ENCODE measurements at regions of chr16 and their contacts with region 1.

Region 1: GRCh38 chr16:85986931-85987749 is 88.2 kb downstream of the IRF8 start:
- DNase-seq: peak; percentile 58
- H3K4me3 Mint-ChIP-seq: no peak overlapping the region
- H3K27ac Mint-ChIP-seq: peak overlapping the region; percentile 96
- H3K4me1 Mint-ChIP-seq: peaks cover 80% of the 10 kb centered on the region
- H3K27me3 Mint-ChIP-seq: peaks cover 6% of the 10 kb centered on the region

Region 2: DNA sequence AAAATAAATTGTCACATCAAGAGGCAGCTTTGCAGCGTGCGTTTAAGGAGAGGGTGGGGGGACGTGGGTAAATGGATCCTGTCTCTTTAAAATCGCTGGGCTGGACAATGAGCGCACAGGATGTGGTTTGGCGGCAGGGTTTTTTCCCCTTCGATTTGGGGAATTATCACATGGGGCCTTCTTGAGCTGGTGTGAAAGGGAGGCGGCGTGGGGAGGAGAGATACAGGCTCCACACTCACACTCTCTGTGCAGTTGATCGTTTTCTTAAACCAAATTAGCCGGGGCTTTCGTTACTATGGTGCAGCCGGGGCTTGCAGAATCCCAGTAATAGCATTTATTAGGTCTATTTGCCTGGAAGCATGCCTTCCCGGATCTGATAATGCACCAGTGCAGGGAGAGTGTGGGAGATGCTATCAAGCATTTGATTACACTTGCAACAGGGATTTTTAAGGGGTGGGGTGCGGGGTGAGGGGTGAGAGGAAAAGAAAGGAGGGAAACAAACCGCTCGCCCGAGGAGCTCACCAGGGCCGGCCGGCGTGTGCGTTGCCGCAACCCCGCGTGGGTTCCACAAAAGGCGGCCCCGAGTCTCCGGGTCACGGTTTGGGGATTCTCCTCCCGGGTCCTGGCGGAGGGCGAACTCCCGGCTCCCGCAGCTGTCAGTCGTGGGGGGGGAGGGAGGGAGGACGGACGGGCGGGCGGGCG is 432.9 kb before region 1 on chr16:
- CTCF ChIA-PET with region 1: no interaction called
- intact Hi-C with region 1: loop called (anchors 2 kb)
- DNase-seq: peak; percentile 93
- H3K4me3 Mint-ChIP-seq: peak overlapping the region; percentile 79
- H3K27ac Mint-ChIP-seq: peak overlapping the region; percentile 93
- H3K4me1 Mint-ChIP-seq: peaks cover 42% of the 10 kb centered on the region
- H3K27me3 Mint-ChIP-seq: no peaks in the 10 kb centered on the region

Region 3: DNA sequence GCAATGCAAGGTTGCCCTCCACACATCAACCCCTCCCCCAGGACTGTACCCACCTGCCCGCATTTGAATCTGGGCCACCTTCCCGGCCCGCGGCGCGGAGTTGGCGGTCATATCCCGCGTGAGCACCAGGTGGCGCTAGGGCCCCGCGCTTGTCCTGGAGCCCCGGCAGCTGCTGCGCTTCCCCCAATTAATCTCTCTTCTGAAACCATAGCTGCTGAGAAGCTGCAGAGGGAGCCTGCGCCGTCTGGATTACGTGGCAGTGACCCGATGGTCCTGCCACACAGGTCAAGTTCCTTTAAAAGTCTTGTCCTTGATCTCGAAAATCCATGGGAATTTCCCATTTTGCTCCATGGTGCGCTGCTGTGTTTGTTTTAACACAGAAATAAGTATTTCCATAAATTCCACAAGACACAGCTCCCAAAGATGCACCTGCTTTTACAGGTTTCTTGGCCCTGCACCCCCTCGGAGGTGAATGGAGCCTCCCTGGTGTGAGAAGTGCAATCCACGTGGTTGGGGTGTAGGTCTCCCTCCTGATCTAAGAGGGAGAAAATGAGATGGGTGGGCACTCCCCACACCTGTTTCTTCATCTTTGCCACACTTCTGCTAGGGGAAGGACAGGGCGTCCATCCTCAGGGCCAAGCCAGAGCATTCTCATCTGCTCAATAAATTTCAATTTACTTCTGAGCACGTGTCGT is 165.6 kb before region 1 on chr16:
- CTCF ChIA-PET with region 1: interaction called, 163 read pairs
- intact Hi-C with region 1: loop called (anchors 1 kb)
- DNase-seq: peak; percentile 89
- H3K4me3 Mint-ChIP-seq: no peak overlapping the region
- H3K27ac Mint-ChIP-seq: no peak overlapping the region
- H3K4me1 Mint-ChIP-seq: peaks cover 11% of the 10 kb centered on the region
- H3K27me3 Mint-ChIP-seq: no peaks in the 10 kb centered on the region

Region 4: GRCh38 chr16:85898521-85899442 is 88.4 kb before region 1 on chr16 and contains the start of gene IRF8:
- CTCF ChIA-PET with region 1: interaction called, 45 read pairs
- intact Hi-C with region 1: loop called (anchors 1 kb)
- DNase-seq: peak; percentile 88
- H3K4me3 Mint-ChIP-seq: peak within 1 kb of the TSS; percentile 87
- H3K27ac Mint-ChIP-seq: peak within 1 kb of the TSS; percentile 93
- H3K4me1 Mint-ChIP-seq: peaks cover 39% of the 10 kb centered on the region
- H3K27me3 Mint-ChIP-seq: no peaks in the 10 kb centered on the region
- total RNA-seq, gene IRF8: 323 to 328 TPM

Region 5: DNA sequence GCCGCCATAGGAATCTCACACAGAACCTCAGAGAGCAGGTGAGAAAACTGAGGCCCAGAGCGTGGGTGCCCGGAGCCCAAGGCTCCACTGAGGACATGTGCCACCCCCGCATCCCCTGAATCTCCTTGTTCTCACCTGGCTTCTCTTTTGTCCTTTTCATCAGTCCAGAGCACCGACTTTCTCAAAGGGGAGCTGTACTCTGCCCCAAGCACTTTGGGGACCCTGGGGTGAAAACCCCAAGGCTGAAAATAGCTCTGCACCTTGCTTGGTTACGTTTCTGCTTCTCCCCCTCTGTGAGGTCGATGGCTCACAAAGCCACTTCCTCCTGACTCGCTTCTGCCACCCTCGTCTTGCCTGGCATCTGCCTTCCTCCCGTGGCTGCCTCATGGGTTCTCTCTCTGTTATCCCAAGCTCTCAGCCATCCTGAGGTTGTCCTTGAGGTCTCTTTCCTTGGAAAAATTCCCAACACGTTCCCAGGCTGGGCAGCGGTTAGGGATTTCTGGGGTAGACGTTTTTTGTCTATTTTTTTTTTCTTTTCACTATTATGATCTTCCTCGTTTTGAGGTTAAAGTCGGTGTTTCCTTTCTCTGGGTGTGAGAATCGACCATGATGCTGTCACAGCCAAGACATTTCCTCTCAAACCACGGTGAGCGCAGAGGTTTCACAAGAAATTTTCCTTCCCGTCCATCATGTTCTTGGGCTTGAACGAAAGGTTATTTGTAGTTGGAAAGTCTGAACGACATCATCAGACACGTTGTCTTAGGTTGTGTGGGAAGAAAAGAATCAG is 51.0 kb before region 1 on chr16:
- CTCF ChIA-PET with region 1: interaction called, 24 read pairs
- intact Hi-C with region 1: loop called (anchors 1 kb)
- DNase-seq: peak; percentile 90
- H3K4me3 Mint-ChIP-seq: peak overlapping the region; percentile 55
- H3K27ac Mint-ChIP-seq: peak overlapping the region; percentile 96
- H3K4me1 Mint-ChIP-seq: peaks cover 62% of the 10 kb centered on the region
- H3K27me3 Mint-ChIP-seq: no peaks in the 10 kb centered on the region

Region 6: DNA sequence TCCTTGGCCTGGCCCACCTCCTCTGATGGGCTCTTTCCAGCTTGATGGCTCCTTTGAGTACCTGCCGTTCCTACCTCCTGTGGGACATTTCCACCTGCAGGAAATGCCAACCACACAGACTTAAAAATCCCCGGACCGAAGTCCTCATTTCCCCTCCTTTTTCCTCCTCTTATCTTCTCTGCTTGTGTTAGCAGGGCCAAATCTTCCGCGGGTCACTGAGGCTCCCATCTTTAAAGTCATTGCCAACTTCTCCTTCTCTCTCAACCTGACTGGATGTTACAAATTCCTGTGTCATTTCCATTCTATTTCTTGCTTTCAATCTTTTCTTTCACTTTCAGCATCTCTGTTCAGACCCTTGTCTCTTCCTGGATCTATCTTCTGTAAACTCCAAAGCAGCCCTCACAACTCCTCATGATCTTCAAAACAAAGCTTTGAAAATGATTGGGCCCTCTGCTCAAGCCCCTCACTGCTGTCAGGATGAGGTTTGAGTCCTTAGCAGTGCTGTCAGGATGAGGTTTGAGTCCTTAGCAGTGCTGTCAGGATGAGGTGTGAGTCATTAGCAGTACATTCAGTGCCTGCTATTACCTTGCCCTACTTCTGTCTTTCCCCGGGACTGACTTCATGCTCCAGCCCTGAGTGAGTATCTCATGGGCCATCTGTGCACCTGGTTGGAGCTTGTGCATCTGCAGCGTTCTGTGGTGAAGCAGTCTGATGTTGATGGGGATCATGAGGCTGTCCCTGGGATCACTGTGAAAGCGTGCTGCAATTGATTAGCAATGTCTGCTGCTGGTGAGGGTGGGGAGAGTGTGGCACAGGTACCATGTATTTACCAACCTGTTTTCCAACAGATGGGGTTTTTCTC is 12.0 kb after region 1 on chr16:
- CTCF ChIA-PET with region 1: interaction called, 29 read pairs
- intact Hi-C with region 1: loop called (anchors 1 kb)
- DNase-seq: peak; percentile 59
- H3K4me3 Mint-ChIP-seq: peak overlapping the region; percentile 0
- H3K27ac Mint-ChIP-seq: peak overlapping the region; percentile 69
- H3K4me1 Mint-ChIP-seq: peaks cover 55% of the 10 kb centered on the region
- H3K27me3 Mint-ChIP-seq: no peaks in the 10 kb centered on the region

Region 7: GRCh38 chr16:86016201-86016871 is 29.2 kb after region 1 on chr16:
- CTCF ChIA-PET with region 1: interaction called, 19 read pairs
- intact Hi-C with region 1: loop called (anchors 1 kb)
- DNase-seq: peak; percentile 67
- H3K4me3 Mint-ChIP-seq: no peak overlapping the region
- H3K27ac Mint-ChIP-seq: no peak overlapping the region
- H3K4me1 Mint-ChIP-seq: peaks cover 21% of the 10 kb centered on the region
- H3K27me3 Mint-ChIP-seq: peaks cover 40% of the 10 kb centered on the region

Region 8: GRCh38 chr16:86519649-86520316 is 532.6 kb after region 1 on chr16:
- CTCF ChIA-PET with region 1: no interaction called
- intact Hi-C with region 1: no loop called
- DNase-seq: peak; percentile 62
- H3K4me3 Mint-ChIP-seq: no peak overlapping the region
- H3K27ac Mint-ChIP-seq: no peak overlapping the region
- H3K4me1 Mint-ChIP-seq: peaks cover 3% of the 10 kb centered on the region
- H3K27me3 Mint-ChIP-seq: peaks cover 51% of the 10 kb centered on the region